Caco-2 (cell line): ENCODE measurements at regions of chr5 and their contacts with region 1.

Region 1: GRCh38 chr5:89168766-89169165 is 285.8 kb upstream of the MEF2C start:
- DNase-seq: no peak
- H3K4me3 ChIP-seq: no peak overlapping the region
- H3K4me3 Mint-ChIP-seq: no peak overlapping the region
- H3K27ac Mint-ChIP-seq: no peak overlapping the region
- H3K4me1 ChIP-seq: no peaks in the 10 kb centered on the region
- H3K4me1 Mint-ChIP-seq: no peaks in the 10 kb centered on the region
- H3K27me3 ChIP-seq: no peaks in the 10 kb centered on the region
- H3K27me3 Mint-ChIP-seq: no peaks in the 10 kb centered on the region
- CTCF ChIP-seq: no peak

Region 2: GRCh38 chr5:89216606-89217005 is 47.8 kb after region 1 on chr5:
- CTCF ChIA-PET with region 1: no interaction called
- POLR2A ChIA-PET with region 1: no interaction called
- intact Hi-C with region 1: loop called (anchors 1 kb)
- DNase-seq: no peak
- H3K4me3 ChIP-seq: no peak overlapping the region
- H3K4me3 Mint-ChIP-seq: no peak overlapping the region
- H3K27ac Mint-ChIP-seq: no peak overlapping the region
- H3K4me1 ChIP-seq: no peaks in the 10 kb centered on the region
- H3K4me1 Mint-ChIP-seq: no peaks in the 10 kb centered on the region
- H3K27me3 ChIP-seq: no peaks in the 10 kb centered on the region
- H3K27me3 Mint-ChIP-seq: peaks cover 2% of the 10 kb centered on the region
- CTCF ChIP-seq: no peak